ENCODE measurements at regions of chr19 and their contacts with region 1.

Region 1: DNA sequence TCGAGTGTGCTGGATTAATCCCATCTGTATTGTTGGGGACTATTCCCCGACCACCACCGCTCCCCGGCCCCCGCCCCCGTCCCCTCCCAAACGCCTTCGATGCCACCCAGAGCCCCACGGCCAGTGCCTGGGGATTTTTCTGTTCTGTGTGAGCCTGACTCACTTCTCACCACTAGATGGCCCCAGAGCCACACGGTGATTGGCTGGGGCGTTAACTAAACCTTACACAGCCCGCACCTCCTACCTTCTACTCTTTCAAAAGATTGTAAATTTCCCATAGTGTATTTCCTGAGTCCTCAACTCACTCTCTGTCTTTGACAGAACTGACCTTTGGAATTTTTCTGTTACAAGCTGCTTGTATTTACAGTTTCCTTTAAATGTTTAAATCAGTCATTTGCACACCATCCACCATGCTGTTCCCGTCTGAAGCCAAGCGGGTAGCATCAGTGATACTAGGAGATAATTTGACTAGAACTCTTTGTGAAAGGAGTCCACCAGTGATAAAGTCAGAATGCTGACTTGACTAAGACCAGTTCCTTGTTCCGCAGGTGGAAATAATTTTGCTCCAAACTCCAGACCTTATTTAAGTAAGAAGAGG is 61.4 kb downstream of the RFX2 start:
- DNase-seq: peak; percentile 93

Region 2: GRCh38 chr19:5805465-5806132 is 243.3 kb before region 1 on chr19:
- intact Hi-C with region 1: no loop called
- DNase-seq: no peak

Region 3: GRCh38 chr19:6021878-6022569 is 26.9 kb before region 1 on chr19:
- intact Hi-C with region 1: no loop called
- DNase-seq: peak; percentile 88

Region 4: DNA sequence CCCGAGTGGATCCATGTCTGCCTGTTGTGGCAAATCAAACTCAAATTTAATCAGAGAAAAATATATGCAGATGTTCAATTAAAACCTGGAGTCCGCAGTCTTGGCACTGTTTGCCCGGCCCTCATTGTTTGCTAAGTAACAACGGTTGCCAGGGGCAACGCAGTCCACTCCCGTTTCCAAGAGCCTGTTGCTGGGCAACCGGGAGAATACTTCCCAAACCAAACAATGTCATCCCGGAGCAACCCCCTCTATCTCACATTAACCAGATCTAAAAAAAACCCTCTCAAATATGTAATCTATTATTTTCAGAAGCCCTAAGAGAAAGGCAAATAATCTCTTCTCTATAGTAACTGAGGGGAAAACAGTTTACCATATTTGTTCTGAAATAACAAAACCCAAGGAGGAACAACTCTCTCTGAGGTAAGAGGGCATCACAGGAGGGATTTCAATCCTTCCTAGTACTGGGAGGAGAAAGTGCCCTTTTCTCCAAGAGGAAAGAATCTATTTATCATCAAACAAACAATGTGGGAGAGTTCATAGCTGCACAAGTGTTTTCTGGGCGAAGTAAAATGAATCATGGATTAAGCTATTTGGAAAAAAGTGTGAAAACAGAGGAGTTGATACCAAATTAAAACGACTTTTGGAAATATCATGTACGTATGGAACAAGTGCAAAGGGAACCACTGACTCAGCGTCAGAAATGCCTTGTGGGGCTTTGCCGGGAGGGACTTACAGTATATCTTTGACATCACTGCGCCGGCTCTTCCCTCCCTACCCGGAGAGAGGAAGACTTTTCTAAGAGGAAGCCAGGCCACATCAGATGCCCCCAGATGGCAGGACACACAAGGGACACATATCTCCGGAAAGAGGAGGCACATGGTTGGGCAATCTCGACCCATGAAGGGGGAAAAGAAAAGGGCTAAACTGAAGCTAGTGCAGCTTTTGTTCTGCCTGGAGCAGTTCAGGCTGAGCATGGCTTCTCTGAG is 18.0 kb after region 1 on chr19:
- intact Hi-C with region 1: no loop called
- DNase-seq: peak; percentile 98

Region 5: GRCh38 chr19:6125571-6125989 is 76.7 kb after region 1 on chr19:
- intact Hi-C with region 1: loop called (anchors 2 to 5 kb)
- DNase-seq: no peak

Region 6: DNA sequence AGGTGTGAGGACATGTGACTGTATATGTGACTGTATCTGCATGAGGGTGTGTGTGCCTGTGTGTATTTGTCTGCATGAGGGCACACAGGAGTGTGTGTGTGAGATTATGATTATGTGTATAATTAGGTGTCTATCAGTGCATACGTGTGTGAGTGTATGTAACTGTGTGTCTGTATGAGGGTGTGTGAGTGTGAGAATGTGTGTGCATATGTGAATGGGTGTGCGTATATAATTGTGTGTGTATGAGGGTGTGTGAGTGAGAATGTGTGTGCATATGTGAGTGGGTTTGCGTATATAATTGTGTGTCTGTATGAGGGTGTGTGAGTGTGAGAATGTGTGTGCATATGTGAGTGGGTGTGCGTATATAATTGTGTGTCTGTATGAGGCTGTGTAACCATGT is 83.6 kb after region 1 on chr19:
- intact Hi-C with region 1: loop called in 1 of 2 experiments (anchors 5 kb)
- DNase-seq: no peak

Measured in posterior vena cava (tissue), 2 donors.